CD8-positive, alpha-beta T cell (primary cell): ENCODE measurements at regions of chr7 and their contacts with region 1.

Region 1: GRCh38 chr7:70975754-70976153 is 156.2 kb upstream of the GALNT17 start:
- DNase-seq: no peak
- ATAC-seq: no peak
- H3K4me3 ChIP-seq: no peak overlapping the region
- H3K4me3 Mint-ChIP-seq: no peak overlapping the region
- H3K27ac ChIP-seq: no peak overlapping the region
- H3K27ac Mint-ChIP-seq: no peak overlapping the region
- H3K4me1 ChIP-seq: no peaks in the 10 kb centered on the region
- H3K4me1 Mint-ChIP-seq: no peaks in the 10 kb centered on the region
- H3K27me3 ChIP-seq: no peaks in the 10 kb centered on the region
- H3K27me3 Mint-ChIP-seq: no peaks in the 10 kb centered on the region
- CTCF ChIP-seq: no peak

Region 2: DNA sequence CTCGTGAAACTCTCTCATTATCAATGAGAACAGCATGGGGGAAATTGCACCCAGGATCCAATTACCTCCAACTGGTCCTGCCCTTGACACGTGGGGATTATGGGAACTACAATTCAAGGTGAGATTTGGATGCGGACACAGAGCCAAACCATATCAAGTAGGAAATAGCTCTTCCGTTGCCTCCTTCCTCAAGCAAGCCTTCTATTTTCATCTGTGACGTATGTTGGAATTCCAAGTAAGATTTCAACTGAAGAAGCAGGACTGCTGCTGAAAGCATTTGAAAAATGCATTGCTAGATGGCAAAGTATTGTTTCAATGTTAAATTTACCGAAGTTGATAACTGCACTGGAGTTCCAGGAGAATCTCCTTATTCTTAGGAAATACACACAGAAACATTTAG is 22.0 kb before region 1 on chr7:
- CTCF ChIA-PET with region 1: no interaction called
- POLR2A ChIA-PET with region 1: no interaction called
- intact Hi-C with region 1: loop called in 1 of 2 experiments (anchors 1 kb)
- DNase-seq: no peak
- ATAC-seq: no peak
- H3K4me3 ChIP-seq: no peak overlapping the region
- H3K4me3 Mint-ChIP-seq: no peak overlapping the region
- H3K27ac ChIP-seq: no peak overlapping the region
- H3K27ac Mint-ChIP-seq: no peak overlapping the region
- H3K4me1 ChIP-seq: no peaks in the 10 kb centered on the region
- H3K4me1 Mint-ChIP-seq: no peaks in the 10 kb centered on the region
- H3K27me3 ChIP-seq: no peaks in the 10 kb centered on the region
- H3K27me3 Mint-ChIP-seq: no peaks in the 10 kb centered on the region
- CTCF ChIP-seq: no peak